Caco-2 (cell line): ENCODE measurements at regions of chr4 and their contacts with region 1.

Region 1: DNA sequence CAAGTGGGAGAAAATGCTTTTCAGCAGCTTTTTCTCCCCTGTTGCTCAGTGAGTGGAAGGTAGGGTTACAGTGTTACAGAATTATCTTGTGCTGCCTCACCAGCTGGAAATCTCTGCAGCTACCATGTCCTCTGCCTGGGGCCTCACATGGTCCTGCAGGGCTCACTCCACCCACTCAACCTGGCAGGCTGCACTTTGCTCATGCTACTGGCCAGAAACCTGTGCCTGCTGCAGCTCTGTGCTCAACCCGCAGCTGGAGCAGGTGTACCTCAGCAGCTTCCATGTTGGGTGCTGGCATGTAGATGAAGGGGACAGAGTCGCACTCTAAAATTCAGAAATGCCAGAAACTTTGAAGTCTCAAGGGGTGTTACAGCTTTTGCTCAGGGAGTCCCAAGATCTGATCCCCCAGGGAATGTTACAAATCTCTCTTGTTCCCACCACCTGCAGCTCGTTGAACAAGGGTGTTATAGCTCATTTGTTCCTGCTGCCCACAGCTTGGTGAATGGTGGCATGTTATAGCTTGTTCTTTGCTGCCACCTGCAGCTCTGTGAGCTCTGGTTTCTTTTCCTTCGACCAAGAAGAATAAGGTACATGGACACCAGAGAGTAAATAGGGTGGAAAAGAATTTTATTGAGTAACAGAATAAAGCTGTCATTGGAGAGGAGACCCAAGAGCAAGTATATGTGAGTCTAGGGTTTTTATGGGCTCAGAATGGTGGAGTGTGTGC is 845.8 kb downstream of the TECRL start:
- DNase-seq: no peak
- H3K4me3 ChIP-seq: no peak overlapping the region
- H3K4me3 Mint-ChIP-seq: no peak overlapping the region
- H3K27ac Mint-ChIP-seq: no peak overlapping the region
- H3K4me1 ChIP-seq: no peaks in the 10 kb centered on the region
- H3K4me1 Mint-ChIP-seq: no peaks in the 10 kb centered on the region
- H3K27me3 ChIP-seq: no peaks in the 10 kb centered on the region
- H3K27me3 Mint-ChIP-seq: no peaks in the 10 kb centered on the region
- CTCF ChIP-seq: no peak

Region 2: DNA sequence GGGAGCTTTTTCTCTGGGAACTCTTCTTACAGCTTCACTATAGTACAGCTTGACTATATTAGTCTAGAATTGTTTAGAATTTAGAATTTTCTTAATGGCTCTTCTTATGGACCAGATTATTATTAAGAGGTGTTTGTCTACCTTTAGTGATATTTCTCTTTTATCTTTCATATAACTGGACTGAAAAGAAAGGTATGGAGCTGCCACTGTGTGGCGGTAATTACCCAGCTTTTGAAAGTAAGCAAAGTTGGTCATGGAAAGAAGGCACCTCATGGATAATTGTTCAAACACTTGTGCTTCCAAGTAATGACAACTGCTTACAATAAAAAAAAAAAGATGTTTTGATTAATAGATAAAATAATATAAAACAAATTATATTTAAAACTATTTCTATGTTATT is 266.7 kb before region 1 on chr4:
- CTCF ChIA-PET with region 1: interaction called, 6 read pairs
- POLR2A ChIA-PET with region 1: no interaction called
- intact Hi-C with region 1: loop called (anchors 1 kb)
- DNase-seq: peak in 1 of 2 experiments; percentile 5
- H3K4me3 ChIP-seq: no peak overlapping the region
- H3K4me3 Mint-ChIP-seq: no peak overlapping the region
- H3K27ac Mint-ChIP-seq: no peak overlapping the region
- H3K4me1 ChIP-seq: no peaks in the 10 kb centered on the region
- H3K4me1 Mint-ChIP-seq: no peaks in the 10 kb centered on the region
- H3K27me3 ChIP-seq: no peaks in the 10 kb centered on the region
- H3K27me3 Mint-ChIP-seq: no peaks in the 10 kb centered on the region
- CTCF ChIP-seq: peak in 1 of 2 experiments; percentile 18

Region 3: GRCh38 chr4:63663870-63664269 is 100.4 kb after region 1 on chr4:
- CTCF ChIA-PET with region 1: no interaction called
- POLR2A ChIA-PET with region 1: no interaction called
- intact Hi-C with region 1: no loop called
- DNase-seq: no peak
- H3K4me3 ChIP-seq: no peak overlapping the region
- H3K4me3 Mint-ChIP-seq: no peak overlapping the region
- H3K27ac Mint-ChIP-seq: no peak overlapping the region
- H3K4me1 ChIP-seq: no peaks in the 10 kb centered on the region
- H3K4me1 Mint-ChIP-seq: no peaks in the 10 kb centered on the region
- H3K27me3 ChIP-seq: no peaks in the 10 kb centered on the region
- H3K27me3 Mint-ChIP-seq: no peaks in the 10 kb centered on the region
- CTCF ChIP-seq: no peak